A673 (cell line): ENCODE measurements at regions of chr1 and their contacts with region 1.

Region 1: GRCh38 chr1:39973503-39974135 is 18.7 kb downstream of the MFSD2A start:
- DNase-seq: peak; percentile 75
- H3K4me3 ChIP-seq: no peak overlapping the region
- H3K27ac ChIP-seq: no peak overlapping the region
- H3K4me1 ChIP-seq: no peaks in the 10 kb centered on the region
- H3K27me3 ChIP-seq: no peaks in the 10 kb centered on the region
- CTCF ChIP-seq: peak; percentile 99

Region 2: DNA sequence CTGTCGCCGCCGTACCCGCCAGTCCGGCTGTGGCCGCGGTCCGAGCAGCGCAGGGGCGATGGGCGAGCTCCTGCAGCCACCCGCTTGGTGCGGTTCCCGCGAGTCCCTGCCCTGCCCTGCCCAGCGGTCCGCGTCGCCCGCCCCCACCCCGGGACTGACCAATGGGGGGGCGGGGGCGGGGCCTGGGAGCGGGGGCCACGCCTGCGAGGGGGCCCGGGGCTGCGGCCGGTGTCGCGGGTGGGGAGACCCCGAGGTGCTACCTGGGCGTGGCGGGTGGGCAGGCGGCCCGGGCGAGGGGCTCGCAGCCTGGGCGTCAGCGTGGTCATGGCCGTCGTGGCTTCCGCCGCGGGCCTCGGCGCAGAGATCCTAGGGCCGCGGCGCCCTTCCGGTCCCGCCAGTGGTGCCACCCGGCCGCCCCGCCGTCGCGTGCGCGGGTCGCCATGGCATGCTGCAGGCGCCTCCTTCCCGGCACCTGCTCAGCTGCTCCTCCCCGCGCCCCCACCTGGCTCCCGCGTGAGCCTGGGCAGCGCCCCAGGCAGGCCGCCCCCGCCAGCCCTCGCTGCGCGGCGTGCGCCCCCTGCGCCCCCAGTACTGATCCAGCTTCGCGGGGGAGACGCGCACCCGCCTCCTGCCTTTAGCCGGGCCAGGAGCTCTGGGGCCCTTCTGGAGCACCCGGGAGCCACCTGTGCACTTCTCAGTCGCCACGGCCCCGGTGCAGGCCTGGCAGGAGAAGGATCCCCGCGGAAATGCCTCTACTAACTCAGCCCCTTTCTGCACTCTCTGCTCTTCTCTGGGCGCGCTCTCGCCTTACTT is 184.7 kb before region 1 on chr1 and contains the start of gene BMP8B:
- CTCF ChIA-PET with region 1: no interaction called
- POLR2A ChIA-PET with region 1: interaction called, 10 read pairs
- intact Hi-C with region 1: no loop called
- DNase-seq: peak; percentile 27
- H3K4me3 ChIP-seq: peak within 1 kb of the TSS; percentile 43
- H3K27ac ChIP-seq: no peak within 1 kb of the TSS
- H3K4me1 ChIP-seq: no peaks in the 10 kb centered on the region
- H3K27me3 ChIP-seq: peaks cover 28% of the 10 kb centered on the region
- CTCF ChIP-seq: no peak
- total RNA-seq, gene BMP8B: 0.06 and 0.09 TPM in 2 replicates